Vagina (tissue), 2 donors: ENCODE measurements at regions of chr9 and their contacts with region 1.

Region 1: DNA sequence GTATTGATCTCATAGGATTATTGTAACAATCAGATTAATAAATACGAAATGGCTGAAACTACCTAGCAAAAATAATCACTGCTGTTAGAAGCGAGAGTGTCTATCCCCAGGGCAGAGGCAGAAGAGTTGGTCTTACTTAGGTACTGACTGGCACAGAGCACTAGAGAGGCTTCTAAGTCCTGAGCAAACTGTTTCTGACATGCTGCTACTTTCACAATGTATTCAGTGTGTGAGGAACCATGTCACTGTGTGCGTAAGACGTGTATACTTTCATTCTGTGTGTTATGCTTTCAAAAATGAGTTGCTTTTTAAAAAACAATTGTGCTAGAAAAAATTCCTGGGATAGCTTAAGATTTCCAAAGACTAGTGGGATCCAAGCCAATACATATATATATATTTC is 5.5 kb upstream of the KLHL9 start:
- DNase-seq: no peak
- H3K4me3 ChIP-seq: no peak overlapping the region
- H3K27ac ChIP-seq: no peak overlapping the region
- H3K4me1 ChIP-seq: no peaks in the 10 kb centered on the region
- H3K27me3 ChIP-seq: no peaks in the 10 kb centered on the region
- CTCF ChIP-seq: no peak
- POLR2A ChIP-seq: no peak

Region 2: GRCh38 chr9:20490246-20490834 is 850.4 kb before region 1 on chr9:
- intact Hi-C with region 1: no loop called
- DNase-seq: no peak
- H3K4me3 ChIP-seq: no peak overlapping the region
- H3K27ac ChIP-seq: no peak overlapping the region
- H3K4me1 ChIP-seq: no peaks in the 10 kb centered on the region
- H3K27me3 ChIP-seq: no peaks in the 10 kb centered on the region
- CTCF ChIP-seq: no peak
- POLR2A ChIP-seq: no peak

Region 3: GRCh38 chr9:21395778-21396717 is 55.3 kb after region 1 on chr9:
- intact Hi-C with region 1: loop called (anchors 10 kb)
- DNase-seq: no peak
- H3K4me3 ChIP-seq: peak overlapping the region; percentile 45
- H3K27ac ChIP-seq: no peak overlapping the region
- H3K4me1 ChIP-seq: peaks cover 7% of the 10 kb centered on the region
- H3K27me3 ChIP-seq: no peaks in the 10 kb centered on the region
- CTCF ChIP-seq: peak; percentile 28 to 65 (median 51)
- POLR2A ChIP-seq: no peak

Region 4: GRCh38 chr9:21684831-21685362 is 344.2 kb after region 1 on chr9:
- intact Hi-C with region 1: no loop called
- DNase-seq: peak in 1 of 2 donors; percentile 88
- H3K4me3 ChIP-seq: no peak overlapping the region
- H3K27ac ChIP-seq: no peak overlapping the region
- H3K4me1 ChIP-seq: peaks cover 11% of the 10 kb centered on the region
- H3K27me3 ChIP-seq: no peaks in the 10 kb centered on the region
- CTCF ChIP-seq: no peak
- POLR2A ChIP-seq: no peak